MCF 10A (cell line): ENCODE measurements at regions of chr6 and their contacts with region 1.

Region 1: GRCh38 chr6:143575440-143575839 is 63.9 kb upstream of the FUCA2 start:
- DNase-seq: peak; percentile 80
- H3K4me3 Mint-ChIP-seq: no peak overlapping the region
- H3K27ac Mint-ChIP-seq: no peak overlapping the region
- H3K4me1 Mint-ChIP-seq: peaks cover 14% of the 10 kb centered on the region
- H3K27me3 Mint-ChIP-seq: no peaks in the 10 kb centered on the region
- CTCF ChIP-seq: peak; percentile 71

Region 2: GRCh38 chr6:143677891-143678791 is 102.7 kb after region 1 on chr6 and contains the start of gene PHACTR2:
- CTCF ChIA-PET with region 1: interaction called, 4 read pairs
- POLR2A ChIA-PET with region 1: interaction called, 8 read pairs
- intact Hi-C with region 1: loop called (anchors 5 kb)
- DNase-seq: peak; percentile 75
- H3K4me3 Mint-ChIP-seq: peak within 1 kb of the TSS; percentile 88
- H3K27ac Mint-ChIP-seq: peak within 1 kb of the TSS; percentile 87
- H3K4me1 Mint-ChIP-seq: peaks cover 51% of the 10 kb centered on the region
- H3K27me3 Mint-ChIP-seq: no peaks in the 10 kb centered on the region
- CTCF ChIP-seq: no peak
- total RNA-seq, gene PHACTR2: 30.0 and 34.4 TPM in 2 replicates

Region 3: GRCh38 chr6:143842902-143843676 is 267.6 kb after region 1 on chr6 and contains the start of gene LTV1:
- CTCF ChIA-PET with region 1: interaction called, 5 read pairs
- POLR2A ChIA-PET with region 1: interaction called, 21 read pairs
- intact Hi-C with region 1: loop called (anchors 1 kb)
- DNase-seq: peak; percentile 97
- H3K4me3 Mint-ChIP-seq: peak within 1 kb of the TSS; percentile 96
- H3K27ac Mint-ChIP-seq: peak within 1 kb of the TSS; percentile 95
- H3K4me1 Mint-ChIP-seq: no peaks in the 10 kb centered on the region
- H3K27me3 Mint-ChIP-seq: no peaks in the 10 kb centered on the region
- CTCF ChIP-seq: no peak
- total RNA-seq, gene LTV1: 40.4 and 47.4 TPM in 2 replicates

Region 4: DNA sequence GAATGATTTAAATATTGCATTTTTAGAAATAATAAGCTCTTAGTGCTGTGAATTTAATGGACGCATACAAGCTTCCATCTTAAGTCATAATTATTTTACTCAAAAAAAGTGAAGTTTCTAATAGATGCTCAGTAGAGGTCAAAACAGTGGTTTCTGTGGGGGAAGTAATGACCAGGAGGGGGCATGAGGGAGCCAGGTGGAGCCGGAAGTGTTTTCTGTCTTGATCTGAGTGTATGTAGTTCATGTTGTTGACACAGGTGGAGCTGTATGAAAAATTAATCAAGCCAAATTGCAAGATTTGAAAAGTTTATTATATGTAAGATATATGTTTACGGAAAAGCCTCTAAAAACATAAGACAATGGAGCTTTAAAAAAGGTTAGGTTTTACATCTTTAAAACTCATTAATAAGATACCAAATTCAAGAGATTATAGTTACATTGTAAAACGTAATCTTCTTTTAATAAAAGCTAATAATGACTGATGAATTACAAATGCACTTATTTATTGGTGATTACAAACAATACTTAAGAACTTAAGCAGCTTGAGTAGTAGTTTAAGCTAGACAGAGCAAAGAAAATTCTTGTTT is 364.7 kb after region 1 on chr6:
- CTCF ChIA-PET with region 1: interaction called, 11 read pairs
- POLR2A ChIA-PET with region 1: no interaction called
- intact Hi-C with region 1: loop called (anchors 1 kb)
- DNase-seq: peak; percentile 73
- H3K4me3 Mint-ChIP-seq: no peak overlapping the region
- H3K27ac Mint-ChIP-seq: no peak overlapping the region
- H3K4me1 Mint-ChIP-seq: peaks cover 4% of the 10 kb centered on the region
- H3K27me3 Mint-ChIP-seq: no peaks in the 10 kb centered on the region
- CTCF ChIP-seq: peak; percentile 79

Region 5: GRCh38 chr6:144013486-144013909 is 438.1 kb after region 1 on chr6:
- CTCF ChIA-PET with region 1: interaction called, 110 read pairs
- POLR2A ChIA-PET with region 1: interaction called, 8 read pairs
- intact Hi-C with region 1: loop called (anchors 1 kb)
- DNase-seq: peak; percentile 90
- H3K4me3 Mint-ChIP-seq: no peak overlapping the region
- H3K27ac Mint-ChIP-seq: no peak overlapping the region
- H3K4me1 Mint-ChIP-seq: no peaks in the 10 kb centered on the region
- H3K27me3 Mint-ChIP-seq: peaks cover 13% of the 10 kb centered on the region
- CTCF ChIP-seq: peak; percentile 94

Region 6: DNA sequence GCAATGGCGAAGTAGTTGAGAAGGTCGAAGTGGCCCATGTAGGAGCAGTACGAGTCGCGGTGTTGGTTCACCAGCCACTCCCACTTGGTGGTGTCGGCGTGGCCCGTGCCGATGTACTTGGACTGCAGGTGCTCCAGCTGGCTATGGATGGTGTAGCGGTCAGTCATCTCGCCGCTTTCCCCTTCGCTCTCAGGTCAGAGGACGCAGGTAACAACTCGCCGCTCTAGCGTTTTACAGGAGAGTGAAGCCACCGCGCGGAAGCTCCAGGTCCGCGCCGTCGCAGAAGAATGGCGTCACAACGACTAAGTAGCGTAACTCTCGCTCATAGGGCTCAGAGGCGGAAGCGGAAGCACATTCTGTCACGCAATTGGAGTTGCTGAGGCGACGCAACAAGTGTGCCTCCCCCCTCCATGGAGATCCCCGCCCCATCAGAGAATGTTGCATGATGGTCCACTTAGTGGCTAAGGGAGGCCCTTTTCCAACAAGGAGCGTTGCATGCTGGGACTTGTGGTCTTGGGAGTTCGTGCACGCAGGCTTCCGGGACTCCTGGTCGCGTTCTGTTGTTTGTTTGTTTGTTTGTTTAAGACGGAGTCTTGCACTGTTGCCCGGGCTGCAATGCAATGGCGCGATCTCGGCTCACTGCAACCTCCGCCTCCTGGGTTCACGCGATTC is 520.0 kb after region 1 on chr6 and contains the start of gene SF3B5:
- CTCF ChIA-PET with region 1: interaction called, 5 read pairs
- POLR2A ChIA-PET with region 1: interaction called, 5 read pairs
- intact Hi-C with region 1: loop called (anchors 5 kb)
- DNase-seq: peak; percentile 100
- H3K4me3 Mint-ChIP-seq: peak within 1 kb of the TSS; percentile 96
- H3K27ac Mint-ChIP-seq: peak within 1 kb of the TSS; percentile 96
- H3K4me1 Mint-ChIP-seq: peaks cover 15% of the 10 kb centered on the region
- H3K27me3 Mint-ChIP-seq: no peaks in the 10 kb centered on the region
- CTCF ChIP-seq: no peak
- total RNA-seq, gene SF3B5: 211 and 298 TPM in 2 replicates

Region 7: GRCh38 chr6:144482142-144482541 is 906.7 kb after region 1 on chr6:
- CTCF ChIA-PET with region 1: no interaction called
- POLR2A ChIA-PET with region 1: no interaction called
- intact Hi-C with region 1: loop called (anchors 5 kb)
- DNase-seq: peak; percentile 84
- H3K4me3 Mint-ChIP-seq: no peak overlapping the region
- H3K27ac Mint-ChIP-seq: no peak overlapping the region
- H3K4me1 Mint-ChIP-seq: no peaks in the 10 kb centered on the region
- H3K27me3 Mint-ChIP-seq: no peaks in the 10 kb centered on the region
- CTCF ChIP-seq: peak; percentile 65